OCI-LY7 (cell line): ENCODE measurements at regions of chr13 and their contacts with region 1.

Region 1: GRCh38 chr13:72763411-72763810 is 18.3 kb downstream of the DIS3 start:
- DNase-seq: no peak
- H3K4me3 ChIP-seq: no peak overlapping the region
- H3K27ac ChIP-seq: no peak overlapping the region
- H3K4me1 ChIP-seq: peaks cover 12% of the 10 kb centered on the region
- CTCF ChIP-seq: no peak

Region 2: DNA sequence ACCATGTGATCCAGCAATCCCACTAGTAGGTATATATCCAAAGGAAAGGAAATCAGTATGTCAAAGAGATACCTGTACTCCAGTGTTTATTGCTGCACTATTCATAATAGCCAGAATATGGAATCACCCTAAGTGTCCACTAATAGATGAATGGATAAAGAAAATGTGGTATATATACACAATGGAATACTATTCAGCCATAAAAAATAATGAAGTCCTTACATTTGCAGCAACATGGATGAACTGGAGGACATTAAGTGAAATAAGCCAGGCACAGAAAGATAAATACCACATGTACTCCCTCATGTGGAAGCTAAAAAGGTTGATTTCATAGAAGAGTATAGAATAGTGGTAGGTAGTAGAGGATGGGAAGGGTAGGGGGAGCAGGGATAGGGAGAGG is 12.2 kb before region 1 on chr13:
- CTCF ChIA-PET with region 1: no interaction called
- POLR2A ChIA-PET with region 1: interaction called, 11 read pairs
- intact Hi-C with region 1: no loop called
- DNase-seq: no peak
- H3K4me3 ChIP-seq: no peak overlapping the region
- H3K27ac ChIP-seq: no peak overlapping the region
- H3K4me1 ChIP-seq: no peaks in the 10 kb centered on the region
- CTCF ChIP-seq: no peak